Dendritic cell treated with granulocyte-macrophage colony-stimulating factor and Interleukin-4, amounts not matched to agents 40 ng/mL and 50 ng/mL, for 4 days (primary cell): ENCODE measurements at regions of chr2 and their contacts with region 1.

Region 1: DNA sequence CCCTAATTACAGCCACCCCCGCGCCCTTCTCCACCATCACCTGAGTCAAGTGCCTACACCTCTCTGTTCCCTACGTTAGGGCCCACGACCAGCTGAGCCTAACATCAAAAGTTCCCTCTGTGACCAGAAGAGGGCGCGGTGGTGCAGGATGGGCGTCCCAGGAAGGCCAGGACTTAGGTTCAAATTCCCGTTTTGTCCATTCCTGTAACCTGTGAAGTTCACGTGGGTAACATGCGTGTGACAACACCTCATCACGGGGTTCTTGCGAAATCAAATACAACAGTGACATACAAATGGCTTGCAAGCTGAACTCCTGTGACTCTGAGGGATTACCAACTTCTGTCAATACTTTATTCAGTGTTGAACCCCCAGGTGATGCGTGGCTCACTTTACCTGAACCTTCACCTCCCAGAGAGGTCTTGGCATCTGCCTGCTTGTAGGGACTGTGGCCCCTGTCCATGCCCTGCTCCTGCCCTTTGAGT is 207.9 kb downstream of the ARL4C start:
- H3K4me3 Mint-ChIP-seq: no peak overlapping the region
- H3K27ac Mint-ChIP-seq: peak overlapping the region; percentile 93
- H3K4me1 Mint-ChIP-seq: peaks cover 45% of the 10 kb centered on the region
- H3K27me3 Mint-ChIP-seq: no peaks in the 10 kb centered on the region

Region 2: GRCh38 chr2:234135720-234136221 is 153.2 kb before region 1 on chr2:
- intact Hi-C with region 1: loop called (anchors 5 kb)
- H3K4me3 Mint-ChIP-seq: no peak overlapping the region
- H3K27ac Mint-ChIP-seq: no peak overlapping the region
- H3K4me1 Mint-ChIP-seq: no peaks in the 10 kb centered on the region
- H3K27me3 Mint-ChIP-seq: peaks cover 1% of the 10 kb centered on the region

Region 3: GRCh38 chr2:234308813-234309195 is 19.8 kb after region 1 on chr2:
- intact Hi-C with region 1: loop called (anchors 1 kb)
- H3K4me3 Mint-ChIP-seq: peak overlapping the region; percentile 45
- H3K27ac Mint-ChIP-seq: peak overlapping the region; percentile 98
- H3K4me1 Mint-ChIP-seq: peaks cover 60% of the 10 kb centered on the region
- H3K27me3 Mint-ChIP-seq: no peaks in the 10 kb centered on the region

Region 4: DNA sequence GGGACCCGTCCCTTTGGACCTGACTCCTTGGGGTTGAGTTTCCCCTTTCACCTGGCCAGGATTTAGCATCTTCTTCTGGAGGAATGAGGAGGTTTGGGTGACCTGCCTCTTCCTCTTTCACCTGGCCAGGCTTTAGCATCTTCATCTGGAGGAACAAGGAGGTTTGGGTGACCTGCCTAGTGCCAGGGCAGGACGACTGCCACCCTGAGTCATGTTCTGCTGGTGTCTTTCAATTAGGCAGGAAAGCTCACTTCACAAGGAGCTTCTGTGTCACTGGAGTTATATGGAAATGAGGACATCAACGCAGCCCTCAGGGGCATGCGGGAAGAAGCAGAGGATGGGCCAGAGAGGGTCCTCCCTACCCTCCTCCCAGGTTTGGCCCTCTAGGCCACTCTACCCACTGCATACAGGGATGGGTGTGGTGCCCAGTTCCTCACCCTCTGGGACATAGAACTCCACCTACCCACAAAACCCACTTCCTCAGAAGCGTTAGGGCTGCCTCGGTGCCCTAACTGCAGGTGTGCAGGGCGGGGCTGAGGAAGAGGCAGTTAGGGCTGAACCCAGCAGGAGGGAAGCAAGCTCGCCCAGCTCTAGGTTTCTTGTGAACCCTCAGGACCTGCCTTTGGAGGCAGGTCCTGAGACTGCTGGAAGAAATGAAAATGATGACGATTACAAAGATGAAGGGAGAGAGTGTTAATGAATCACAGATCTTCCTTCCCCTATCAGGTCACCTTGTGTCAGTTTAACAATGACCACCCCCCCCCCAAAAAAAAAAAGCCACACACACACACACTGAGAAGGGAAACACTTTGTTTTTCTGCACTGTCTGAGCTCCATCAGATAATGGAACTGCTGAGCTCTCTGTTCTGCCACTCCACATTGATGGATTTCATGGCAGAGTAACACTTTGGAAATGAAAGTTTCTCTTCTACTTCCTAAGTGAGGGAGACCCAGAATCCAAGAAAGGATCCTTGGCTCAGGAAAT is 136.9 kb after region 1 on chr2:
- intact Hi-C with region 1: loop called (anchors 5 kb)
- H3K4me3 Mint-ChIP-seq: no peak overlapping the region
- H3K27ac Mint-ChIP-seq: peak overlapping the region; percentile 98
- H3K4me1 Mint-ChIP-seq: peaks cover 60% of the 10 kb centered on the region
- H3K27me3 Mint-ChIP-seq: no peaks in the 10 kb centered on the region

Region 5: DNA sequence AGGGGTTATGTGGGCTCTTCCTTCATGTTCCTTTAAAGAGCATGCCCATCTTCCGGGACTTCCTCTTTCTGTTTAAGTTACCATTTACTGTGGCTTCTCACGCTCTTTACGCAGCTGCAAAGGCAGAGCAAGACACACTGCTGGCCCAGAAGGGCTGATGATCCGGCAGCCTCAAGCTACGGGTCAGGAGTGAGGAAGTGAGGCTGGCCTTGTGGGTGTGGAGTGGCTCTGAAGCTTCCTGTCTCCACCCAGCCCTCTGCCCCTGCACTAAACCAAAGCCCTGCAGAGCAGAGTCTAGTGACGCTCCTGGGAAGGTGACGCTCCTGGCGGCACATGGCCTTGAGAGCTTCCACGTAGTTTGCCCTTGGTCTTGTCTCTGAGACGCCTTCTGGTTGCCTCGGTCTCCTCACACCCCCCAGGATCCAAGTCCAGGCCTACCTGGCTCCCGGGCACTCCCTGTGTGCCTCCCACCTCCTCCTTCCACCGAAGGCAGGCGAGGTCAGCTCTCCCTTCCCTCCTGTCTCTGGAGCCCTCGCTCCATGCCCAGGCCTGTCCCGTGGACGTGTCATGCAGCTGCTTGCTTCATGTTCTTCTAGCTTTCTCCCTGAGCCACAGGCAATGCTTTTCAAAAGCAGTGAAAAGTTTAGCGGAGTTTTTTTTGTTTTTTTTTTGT is 157.5 kb after region 1 on chr2:
- intact Hi-C with region 1: loop called (anchors 1 kb)
- H3K4me3 Mint-ChIP-seq: peak overlapping the region; percentile 51
- H3K27ac Mint-ChIP-seq: peak overlapping the region; percentile 99
- H3K4me1 Mint-ChIP-seq: peaks cover 60% of the 10 kb centered on the region
- H3K27me3 Mint-ChIP-seq: no peaks in the 10 kb centered on the region

Region 6: GRCh38 chr2:234494361-234495250 is 205.6 kb after region 1 on chr2:
- intact Hi-C with region 1: loop called (anchors 1 kb)
- H3K4me3 Mint-ChIP-seq: peak overlapping the region; percentile 99
- H3K27ac Mint-ChIP-seq: peak overlapping the region; percentile 99
- H3K4me1 Mint-ChIP-seq: peaks cover 43% of the 10 kb centered on the region
- H3K27me3 Mint-ChIP-seq: peaks cover 12% of the 10 kb centered on the region